Endothelial cell of umbilical vein (primary cell): ENCODE measurements at regions of chr5 and their contacts with region 1.

Region 1: GRCh38 chr5:163867324-163867723 is 361.9 kb downstream of the MAT2B start:
- DNase-seq: peak; percentile 76
- H3K4me3 ChIP-seq: no peak overlapping the region
- H3K27ac ChIP-seq: peak overlapping the region; percentile 99
- H3K4me1 ChIP-seq: peaks cover 55% of the 10 kb centered on the region
- H3K27me3 ChIP-seq: no peaks in the 10 kb centered on the region
- CTCF ChIP-seq: no peak
- POLR2A ChIP-seq: peak; percentile 26

Region 2: DNA sequence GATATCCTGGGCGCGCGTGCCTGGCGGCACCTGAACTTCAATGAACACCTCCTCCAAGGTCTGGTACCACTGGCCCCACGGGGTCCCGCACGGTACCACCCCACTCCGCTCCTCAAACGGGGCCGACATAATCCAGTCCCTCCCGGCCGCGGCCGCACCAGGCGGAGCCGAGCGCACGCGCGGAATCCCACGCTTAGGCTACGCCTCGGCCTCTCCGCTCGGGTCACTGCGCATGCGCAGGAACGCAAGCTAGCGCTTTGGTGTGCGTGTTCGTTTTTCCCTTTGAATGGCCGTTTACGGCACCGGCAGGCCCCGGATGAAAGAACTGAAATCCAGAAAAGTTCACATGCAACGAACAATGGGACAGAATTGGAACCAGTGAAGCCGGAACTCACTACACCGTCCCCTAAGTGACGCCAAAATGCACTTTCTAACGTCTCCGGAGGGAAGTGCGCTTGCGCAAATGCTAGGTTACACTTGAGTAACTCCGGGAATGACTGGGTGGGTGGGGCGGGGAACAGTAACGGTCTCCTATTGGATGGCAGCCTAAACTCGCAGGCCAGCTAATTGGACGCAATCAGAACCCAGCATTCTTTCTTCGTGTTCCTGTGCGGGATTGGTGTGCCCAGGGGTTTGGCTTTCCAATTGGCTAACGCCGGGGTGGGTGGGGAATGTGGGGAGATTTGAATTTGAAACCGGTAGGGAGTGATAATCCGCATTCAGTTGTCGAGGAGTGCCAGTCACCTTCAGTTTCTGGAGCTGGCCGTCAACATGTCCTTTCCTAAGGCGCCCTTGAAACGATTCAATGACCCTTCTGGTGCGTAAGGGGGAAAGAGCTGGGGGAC is 407.2 kb before region 1 on chr5 and contains the starts of genes HMMR and NUDCD2:
- CTCF ChIA-PET with region 1: no interaction called
- POLR2A ChIA-PET with region 1: no interaction called
- dilution Hi-C with region 1: no loop called
- intact Hi-C with region 1: loop called (anchors 1 kb)
- DNase-seq: peak; percentile 99
- H3K4me3 ChIP-seq: peak within 1 kb of the TSS; percentile 85 to 96 (median 92)
- H3K27ac ChIP-seq: peak within 1 kb of the TSS; percentile 99
- H3K4me1 ChIP-seq: peaks cover 21% of the 10 kb centered on the region
- H3K27me3 ChIP-seq: no peaks in the 10 kb centered on the region
- CTCF ChIP-seq: peak in 1 of 2 donors; percentile 11
- POLR2A ChIP-seq: peak; percentile 95
- total RNA-seq, gene HMMR: 26.0 and 31.0 TPM in 2 replicates
- total RNA-seq, gene NUDCD2: 46.9 and 50.3 TPM in 2 replicates

Region 3: GRCh38 chr5:163894645-163895044 is 27.3 kb after region 1 on chr5:
- CTCF ChIA-PET with region 1: no interaction called
- POLR2A ChIA-PET with region 1: no interaction called
- dilution Hi-C with region 1: no loop called
- intact Hi-C with region 1: loop called (anchors 1 kb)
- DNase-seq: peak; percentile 79
- H3K4me3 ChIP-seq: no peak overlapping the region
- H3K27ac ChIP-seq: peak overlapping the region; percentile 55
- H3K4me1 ChIP-seq: peaks cover 14% of the 10 kb centered on the region
- H3K27me3 ChIP-seq: no peaks in the 10 kb centered on the region
- CTCF ChIP-seq: no peak
- POLR2A ChIP-seq: no peak

Region 4: GRCh38 chr5:163968651-163969050 is 101.3 kb after region 1 on chr5:
- CTCF ChIA-PET with region 1: no interaction called
- POLR2A ChIA-PET with region 1: no interaction called
- dilution Hi-C with region 1: no loop called
- intact Hi-C with region 1: loop called (anchors 1 kb)
- DNase-seq: peak; percentile 14
- H3K4me3 ChIP-seq: no peak overlapping the region
- H3K27ac ChIP-seq: peak overlapping the region; percentile 35
- H3K4me1 ChIP-seq: peaks cover 8% of the 10 kb centered on the region
- H3K27me3 ChIP-seq: no peaks in the 10 kb centered on the region
- CTCF ChIP-seq: no peak
- POLR2A ChIP-seq: no peak